Activated B cell treated with CpG ODN at 0.5 μM for 24 hours (primary cell): ENCODE measurements at regions of chr21 and their contacts with region 1.

Region 1: DNA sequence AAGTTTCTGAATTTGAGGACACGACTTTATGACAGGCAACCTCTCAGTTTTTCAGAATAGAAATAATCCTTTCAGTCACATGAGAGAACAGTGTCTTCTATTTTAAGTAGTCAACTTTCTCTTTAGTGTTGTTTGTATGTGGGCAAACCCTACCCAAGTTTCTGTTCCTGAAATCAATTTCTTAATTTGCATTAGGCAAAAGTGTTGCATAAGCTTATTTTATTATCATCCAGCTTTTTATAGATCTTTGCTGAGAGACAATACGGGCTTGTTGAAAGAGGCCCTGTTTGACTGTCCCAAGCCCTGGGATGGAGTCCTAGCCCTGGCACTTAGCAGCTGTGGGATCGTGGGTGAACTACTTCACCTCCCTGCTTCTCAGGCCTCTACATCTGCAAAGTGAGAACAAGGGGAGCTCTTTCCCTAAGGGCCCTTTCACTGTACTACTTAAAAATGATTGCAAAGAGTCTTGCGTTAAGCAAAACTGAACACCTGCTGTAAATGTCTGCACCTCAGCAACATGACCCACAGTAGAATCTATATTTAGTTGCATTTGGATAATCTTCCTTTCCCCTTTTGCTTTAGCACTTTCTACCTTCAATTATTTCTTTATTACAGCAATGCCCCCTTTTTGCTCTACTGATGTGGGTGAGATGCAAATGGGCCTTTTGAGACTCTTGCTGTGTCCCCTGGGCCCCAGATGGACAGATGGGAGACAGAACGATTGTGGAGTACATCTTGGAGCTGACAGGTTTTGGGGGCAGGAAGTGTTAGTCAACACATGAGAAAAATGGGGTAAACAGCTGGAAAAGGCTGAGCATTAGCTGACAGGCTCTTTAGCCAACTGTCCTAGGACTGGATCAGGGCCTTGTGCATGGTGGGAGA is 41.0 kb upstream of the SCAF4 start:
- DNase-seq: peak; percentile 46
- ATAC-seq: peak; percentile 86
- H3K4me3 Mint-ChIP-seq: peak overlapping the region; percentile 76
- H3K27ac Mint-ChIP-seq: peak overlapping the region; percentile 98
- H3K4me1 Mint-ChIP-seq: peaks cover 61% of the 10 kb centered on the region
- H3K27me3 Mint-ChIP-seq: no peaks in the 10 kb centered on the region
- CTCF ChIP-seq: no peak

Region 2: DNA sequence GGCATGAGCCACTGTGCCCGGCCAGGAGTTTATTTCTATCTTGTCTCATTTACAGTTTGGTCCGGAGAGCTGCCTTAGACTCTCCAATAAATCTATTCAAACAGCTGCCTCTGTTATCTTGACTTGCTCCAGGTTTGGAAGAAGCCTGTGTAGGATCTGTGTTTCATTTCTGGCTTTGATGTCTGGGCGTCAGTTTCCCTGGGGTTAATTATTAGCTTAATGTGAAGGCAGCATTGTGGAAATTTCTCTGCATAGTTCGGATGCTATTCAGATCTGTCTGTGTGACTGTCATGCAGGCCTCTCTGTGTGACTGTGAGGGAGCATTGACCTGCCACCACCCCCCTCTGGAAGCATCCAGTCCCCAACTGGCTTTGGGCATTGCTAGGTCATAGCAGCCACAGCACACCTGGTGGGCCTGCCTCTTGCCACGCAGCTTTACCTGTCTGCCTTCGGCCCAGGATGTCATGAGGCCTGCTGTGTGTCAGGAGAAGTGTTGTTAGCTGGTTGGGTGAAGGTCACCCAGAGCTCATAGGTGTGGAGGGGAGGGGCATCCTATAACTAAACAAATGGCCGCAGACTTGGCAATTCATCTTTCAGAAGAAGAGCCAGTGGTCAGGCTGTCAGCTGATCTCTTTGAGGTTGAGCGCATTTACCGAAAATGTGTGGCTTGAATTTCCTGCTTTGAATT is 1640.1 kb after region 1 on chr21:
- CTCF ChIA-PET with region 1: no interaction called
- POLR2A ChIA-PET with region 1: interaction called, 14 read pairs
- intact Hi-C with region 1: no loop called
- DNase-seq: no peak
- ATAC-seq: peak; percentile 49
- H3K4me3 Mint-ChIP-seq: peak overlapping the region; percentile 50
- H3K27ac Mint-ChIP-seq: peak overlapping the region; percentile 86
- H3K4me1 Mint-ChIP-seq: peaks cover 60% of the 10 kb centered on the region
- H3K27me3 Mint-ChIP-seq: no peaks in the 10 kb centered on the region
- CTCF ChIP-seq: no peak